CD4-positive, alpha-beta memory T cell (primary cell): ENCODE measurements at regions of chr14 and their contacts with region 1.

Region 1: DNA sequence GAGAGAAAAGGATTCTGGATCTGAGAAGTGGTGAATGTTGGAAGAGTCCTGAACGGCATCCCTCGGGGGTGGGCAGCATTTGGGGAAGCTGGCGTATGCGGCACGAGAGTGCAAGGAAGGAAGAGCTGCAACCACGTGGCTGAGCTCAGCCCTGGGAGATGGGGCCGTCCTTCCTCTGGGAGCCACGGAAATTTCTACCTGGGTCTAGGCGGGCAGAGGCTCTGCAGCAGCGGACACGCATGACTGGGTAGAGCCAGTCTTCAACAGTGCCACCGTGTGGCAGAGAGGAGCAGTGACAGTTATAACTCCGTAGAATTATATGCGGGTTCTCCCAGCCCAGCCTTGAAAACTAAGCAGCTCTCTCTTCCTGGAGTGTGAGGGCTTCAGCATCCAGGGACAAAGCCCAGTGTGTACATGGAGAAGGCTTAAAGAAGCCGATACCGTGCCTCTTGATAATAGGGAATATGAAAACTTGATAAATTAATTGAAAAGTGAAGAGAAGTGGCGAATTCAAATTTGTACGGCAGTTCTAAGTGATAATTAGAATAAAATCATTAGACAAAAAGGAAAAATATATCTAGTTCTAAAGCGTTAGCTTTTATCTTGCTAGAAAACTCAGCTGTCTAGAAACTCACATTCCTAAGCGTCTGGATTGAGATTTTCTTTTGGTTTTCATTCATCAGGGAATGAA is 82.9 kb upstream of the STXBP6 start:
- DNase-seq: peak; percentile 25 to 43 (median 38)
- H3K4me3 ChIP-seq: no peak overlapping the region
- H3K4me3 Mint-ChIP-seq: peak overlapping the region in 1 of 8 donors; percentile 27
- H3K27ac ChIP-seq: no peak overlapping the region
- H3K27ac Mint-ChIP-seq: peak overlapping the region in 1 of 7 donors; percentile 4
- H3K4me1 ChIP-seq: peaks cover 4% of the 10 kb centered on the region
- H3K4me1 Mint-ChIP-seq: peaks cover 0 to 6% (median 2%) of the 10 kb centered on the region in 4 donors
- H3K27me3 ChIP-seq: no peaks in the 10 kb centered on the region
- H3K27me3 Mint-ChIP-seq: peaks cover 22 to 30% of the 10 kb centered on the region in 2 donors

Region 2: GRCh38 chr14:24013654-24014514 is 1119.0 kb before region 1 on chr14:
- CTCF ChIA-PET with region 1: no interaction called
- POLR2A ChIA-PET with region 1: no interaction called
- intact Hi-C with region 1: loop called (anchors 10 kb)
- DNase-seq: peak; percentile 60 to 77 (median 70)
- H3K4me3 ChIP-seq: no peak overlapping the region
- H3K4me3 Mint-ChIP-seq: no peak overlapping the region
- H3K27ac ChIP-seq: no peak overlapping the region
- H3K27ac Mint-ChIP-seq: no peak overlapping the region
- H3K4me1 ChIP-seq: peaks cover 19% of the 10 kb centered on the region
- H3K4me1 Mint-ChIP-seq: peaks cover 19 to 27% (median 23%) of the 10 kb centered on the region in 4 donors
- H3K27me3 ChIP-seq: no peaks in the 10 kb centered on the region
- H3K27me3 Mint-ChIP-seq: peaks cover 0 to 3% of the 10 kb centered on the region in 2 donors

Region 3: GRCh38 chr14:24690492-24690891 is 442.4 kb before region 1 on chr14:
- CTCF ChIA-PET with region 1: interaction called, 3 read pairs
- POLR2A ChIA-PET with region 1: no interaction called
- intact Hi-C with region 1: loop called (anchors 5 kb)
- DNase-seq: no peak
- H3K4me3 ChIP-seq: no peak overlapping the region
- H3K4me3 Mint-ChIP-seq: no peak overlapping the region
- H3K27ac ChIP-seq: no peak overlapping the region
- H3K27ac Mint-ChIP-seq: no peak overlapping the region
- H3K4me1 ChIP-seq: peaks cover 37% of the 10 kb centered on the region
- H3K4me1 Mint-ChIP-seq: peaks cover 11 to 17% (median 14%) of the 10 kb centered on the region in 4 donors
- H3K27me3 ChIP-seq: no peaks in the 10 kb centered on the region
- H3K27me3 Mint-ChIP-seq: no peaks in the 10 kb centered on the region

Region 4: DNA sequence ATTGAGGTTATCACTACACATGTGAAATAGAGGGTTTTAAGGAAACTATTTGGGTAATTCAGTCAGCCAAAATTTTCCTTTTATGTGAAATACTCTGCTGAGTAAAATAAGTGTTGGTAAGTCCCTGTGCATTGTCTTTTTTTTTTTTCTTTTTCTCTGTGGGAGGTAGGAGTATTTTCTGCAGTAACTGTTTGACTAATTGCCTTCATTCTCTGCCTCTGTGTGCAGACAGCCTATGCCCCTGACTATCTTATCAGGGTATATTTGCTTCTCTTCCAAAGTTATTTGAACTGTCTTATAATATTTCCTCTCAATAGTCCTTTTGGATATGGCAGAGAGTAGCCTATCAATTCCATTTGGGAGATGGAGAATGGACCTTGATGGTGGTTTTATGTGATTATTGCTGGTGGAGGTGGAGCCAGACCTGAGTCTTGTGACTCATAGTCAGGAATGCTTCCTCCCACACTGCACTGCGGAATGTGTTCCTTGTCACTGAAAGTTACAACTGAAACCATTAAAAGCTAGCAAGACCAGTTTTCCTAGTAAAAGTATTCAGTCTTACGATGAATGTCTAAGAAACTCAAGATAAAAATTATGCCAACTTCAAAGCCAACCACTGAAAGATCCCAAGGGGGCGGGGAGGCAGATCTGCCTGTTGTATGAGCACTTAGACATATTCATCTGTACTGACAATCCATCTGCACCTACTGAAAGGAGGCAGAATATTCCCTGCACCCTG is 42.0 kb before region 1 on chr14:
- CTCF ChIA-PET with region 1: no interaction called
- POLR2A ChIA-PET with region 1: no interaction called
- intact Hi-C with region 1: no loop called
- DNase-seq: no peak
- H3K4me3 ChIP-seq: no peak overlapping the region
- H3K4me3 Mint-ChIP-seq: no peak overlapping the region
- H3K27ac ChIP-seq: no peak overlapping the region
- H3K27ac Mint-ChIP-seq: no peak overlapping the region
- H3K4me1 ChIP-seq: no peaks in the 10 kb centered on the region
- H3K4me1 Mint-ChIP-seq: no peaks in the 10 kb centered on the region
- H3K27me3 ChIP-seq: no peaks in the 10 kb centered on the region
- H3K27me3 Mint-ChIP-seq: peaks cover 20 to 28% of the 10 kb centered on the region in 2 donors

Region 5: GRCh38 chr14:25113394-25113793 is 19.5 kb before region 1 on chr14:
- CTCF ChIA-PET with region 1: interaction called, 10 read pairs
- POLR2A ChIA-PET with region 1: no interaction called
- intact Hi-C with region 1: no loop called
- DNase-seq: no peak
- H3K4me3 ChIP-seq: no peak overlapping the region
- H3K4me3 Mint-ChIP-seq: no peak overlapping the region
- H3K27ac ChIP-seq: no peak overlapping the region
- H3K27ac Mint-ChIP-seq: no peak overlapping the region
- H3K4me1 ChIP-seq: no peaks in the 10 kb centered on the region
- H3K4me1 Mint-ChIP-seq: no peaks in the 10 kb centered on the region
- H3K27me3 ChIP-seq: no peaks in the 10 kb centered on the region
- H3K27me3 Mint-ChIP-seq: peaks cover 9 to 13% of the 10 kb centered on the region in 2 donors

Region 6: DNA sequence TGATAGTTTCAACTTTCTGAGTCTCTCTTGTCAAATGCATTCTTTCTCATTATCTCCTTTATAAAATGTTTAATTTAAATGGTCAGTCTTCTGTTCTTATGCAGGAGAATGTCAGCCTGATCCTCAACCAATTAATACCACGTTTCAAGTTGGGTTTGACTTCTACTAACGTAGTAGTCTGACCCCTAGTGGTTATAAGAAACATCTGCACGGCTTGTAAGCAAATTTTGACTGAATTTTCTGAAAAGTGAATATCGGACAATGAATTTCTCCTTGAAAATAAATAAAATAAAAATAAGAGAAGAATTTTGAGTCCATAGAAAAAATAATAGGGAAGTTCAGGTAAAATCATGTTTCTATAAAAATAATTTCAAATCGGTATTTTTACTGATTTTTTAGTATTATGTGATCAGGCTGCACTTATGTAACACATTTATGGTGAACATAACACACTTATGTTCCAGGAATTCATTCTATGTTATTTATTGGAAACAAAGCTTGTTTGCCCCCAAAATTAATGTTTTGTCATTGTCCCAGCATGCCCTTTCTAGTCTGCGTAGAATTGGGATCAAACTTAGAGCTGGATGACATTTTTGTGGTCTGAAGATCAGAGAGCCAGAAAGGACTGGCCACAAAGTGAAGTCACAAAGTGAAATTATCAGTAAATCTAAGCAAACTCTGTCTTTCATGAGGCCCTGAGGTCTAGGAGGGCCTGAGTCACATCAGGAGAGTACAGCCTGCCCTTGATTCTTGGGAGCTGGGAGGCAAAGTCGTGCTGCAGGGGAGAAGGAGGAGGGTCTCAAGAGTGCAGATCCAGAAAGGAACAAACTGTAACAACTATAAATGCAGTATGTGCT is 18.3 kb after region 1 on chr14:
- CTCF ChIA-PET with region 1: interaction called, 12 read pairs
- POLR2A ChIA-PET with region 1: no interaction called
- intact Hi-C with region 1: no loop called
- DNase-seq: peak in 3 of 5 donors; percentile 4 to 11 (median 5)
- H3K4me3 ChIP-seq: no peak overlapping the region
- H3K4me3 Mint-ChIP-seq: no peak overlapping the region
- H3K27ac ChIP-seq: no peak overlapping the region
- H3K27ac Mint-ChIP-seq: no peak overlapping the region
- H3K4me1 ChIP-seq: no peaks in the 10 kb centered on the region
- H3K4me1 Mint-ChIP-seq: no peaks in the 10 kb centered on the region
- H3K27me3 ChIP-seq: no peaks in the 10 kb centered on the region
- H3K27me3 Mint-ChIP-seq: peaks cover 0 to 9% of the 10 kb centered on the region in 2 donors

Region 7: GRCh38 chr14:25436288-25436875 is 303.5 kb after region 1 on chr14:
- CTCF ChIA-PET with region 1: no interaction called
- POLR2A ChIA-PET with region 1: no interaction called
- intact Hi-C with region 1: no loop called
- DNase-seq: no peak
- H3K4me3 ChIP-seq: no peak overlapping the region
- H3K4me3 Mint-ChIP-seq: no peak overlapping the region
- H3K27ac ChIP-seq: no peak overlapping the region
- H3K27ac Mint-ChIP-seq: no peak overlapping the region
- H3K4me1 ChIP-seq: no peaks in the 10 kb centered on the region
- H3K4me1 Mint-ChIP-seq: no peaks in the 10 kb centered on the region
- H3K27me3 ChIP-seq: no peaks in the 10 kb centered on the region
- H3K27me3 Mint-ChIP-seq: no peaks in the 10 kb centered on the region